ENCODE measurements at regions of chr12 and their contacts with region 1.

Region 1: GRCh38 chr12:131087991-131088700 is 134.4 kb downstream of the ADGRD1 start:
- DNase-seq: peak in 1 of 2 donors; percentile 10
- ATAC-seq: peak in 1 of 8 donors; percentile 29
- H3K4me3 ChIP-seq: no peak overlapping the region
- H3K27ac ChIP-seq: no peak overlapping the region
- H3K4me1 ChIP-seq: peaks cover 0 to 32% (median 8%) of the 10 kb centered on the region in 9 donors
- H3K27me3 ChIP-seq: no peaks in the 10 kb centered on the region
- CTCF ChIP-seq: no peak

Region 2: DNA sequence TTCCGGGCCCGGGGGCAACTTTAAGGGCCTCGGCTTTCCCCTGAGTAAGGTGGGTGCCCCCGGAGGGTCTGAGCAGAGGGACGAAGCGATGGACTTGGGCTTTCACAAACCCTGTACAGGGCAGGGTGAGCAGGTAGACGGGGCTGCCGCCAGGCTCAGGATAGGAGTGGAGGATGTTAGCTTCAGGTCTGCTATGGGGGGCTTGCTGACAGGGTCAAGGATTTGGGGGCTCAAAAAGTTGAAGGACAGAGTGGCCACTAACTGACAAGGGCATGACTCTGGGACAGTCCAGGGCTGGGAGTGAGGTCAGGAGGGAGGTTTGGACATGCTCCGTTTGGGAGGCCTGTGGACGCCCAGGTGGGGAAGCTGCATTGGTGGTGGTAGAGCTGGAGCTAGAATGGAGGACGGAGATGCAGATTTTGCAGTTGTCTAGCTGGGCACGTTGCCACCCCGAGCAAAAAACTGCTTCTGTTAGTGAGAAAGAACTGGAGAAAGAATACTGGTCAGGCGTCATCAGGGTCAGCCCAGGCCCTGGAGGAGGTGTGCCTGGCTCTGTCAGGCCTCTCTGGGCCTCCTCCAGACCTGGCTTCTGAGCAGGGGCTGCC is 21.2 kb before region 1 on chr12:
- intact Hi-C with region 1: loop called in 1 of 10 experiments (anchors 1 kb)
- DNase-seq: peak in 1 of 2 donors; percentile 12
- ATAC-seq: peak in 2 of 8 donors; percentile 5 to 39
- H3K4me3 ChIP-seq: no peak overlapping the region
- H3K27ac ChIP-seq: peak overlapping the region in 1 of 10 donors; percentile 39
- H3K4me1 ChIP-seq: peaks cover 0 to 34% (median 16%) of the 10 kb centered on the region in 9 donors
- H3K27me3 ChIP-seq: no peaks in the 10 kb centered on the region
- CTCF ChIP-seq: no peak

Region 3: GRCh38 chr12:131076791-131077747 is 11.1 kb before region 1 on chr12:
- intact Hi-C with region 1: loop called in 1 of 10 experiments (anchors 1 kb)
- DNase-seq: no peak
- ATAC-seq: peak in 1 of 8 donors; percentile 9
- H3K4me3 ChIP-seq: no peak overlapping the region
- H3K27ac ChIP-seq: no peak overlapping the region
- H3K4me1 ChIP-seq: peaks cover 0 to 20% (median 14%) of the 10 kb centered on the region in 9 donors
- H3K27me3 ChIP-seq: no peaks in the 10 kb centered on the region
- CTCF ChIP-seq: no peak